ENCODE measurements at regions of chr5 and their contacts with region 1.

Region 1: GRCh38 chr5:16666883-16667398 is 50.1 kb upstream of the RETREG1 start:
- DNase-seq: no peak
- H3K4me3 ChIP-seq: no peak overlapping the region
- H3K27ac ChIP-seq: no peak overlapping the region
- H3K4me1 ChIP-seq: peaks cover 18% of the 10 kb centered on the region
- H3K27me3 ChIP-seq: no peaks in the 10 kb centered on the region
- CTCF ChIP-seq: no peak
- EP300 ChIP-seq: no peak
- POLR2A ChIP-seq: no peak

Region 2: GRCh38 chr5:17355586-17356346 is 688.8 kb after region 1 on chr5:
- intact Hi-C with region 1: no loop called
- DNase-seq: no peak
- H3K4me3 ChIP-seq: no peak overlapping the region
- H3K27ac ChIP-seq: no peak overlapping the region
- H3K4me1 ChIP-seq: peaks cover 3% of the 10 kb centered on the region
- H3K27me3 ChIP-seq: no peaks in the 10 kb centered on the region
- CTCF ChIP-seq: no peak
- EP300 ChIP-seq: no peak
- POLR2A ChIP-seq: no peak

Region 3: DNA sequence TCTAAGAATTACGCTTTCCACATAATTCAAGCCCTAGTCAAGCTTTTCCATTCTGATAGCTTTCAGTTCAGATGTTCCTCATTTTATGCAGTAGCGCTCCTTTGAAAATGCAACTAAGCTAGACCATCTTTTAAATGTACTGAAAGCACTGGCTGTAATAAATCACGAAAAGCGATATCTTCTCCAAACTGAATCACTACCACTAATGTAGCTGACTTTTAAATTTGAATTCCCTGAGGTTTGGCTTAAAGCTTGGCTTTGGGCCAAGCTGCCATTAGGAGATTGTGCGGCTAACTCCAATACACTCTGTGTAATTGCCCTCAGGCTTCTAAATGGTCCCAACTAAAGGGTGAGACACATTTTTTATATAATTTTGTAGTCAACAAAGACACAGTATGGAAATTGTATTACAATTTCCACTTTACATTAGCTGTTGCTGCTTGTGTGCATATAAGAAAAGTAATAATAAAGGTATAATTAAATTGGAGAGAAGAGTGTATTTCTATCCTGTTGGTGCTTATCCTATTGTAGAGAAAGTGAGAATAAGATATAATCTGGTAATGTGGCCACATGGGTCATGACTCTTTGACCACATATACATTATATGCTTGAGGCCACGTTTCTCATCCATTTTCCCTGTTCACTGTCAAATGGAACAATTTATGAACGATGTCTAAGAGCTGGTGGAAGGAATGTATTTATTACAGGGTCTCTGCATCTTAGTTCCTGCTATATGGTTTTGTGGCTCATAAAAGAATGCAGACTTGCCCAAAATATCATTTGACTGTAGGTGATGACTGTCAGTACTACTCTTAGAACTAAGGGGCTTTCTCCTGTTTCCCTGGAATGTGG is 712.4 kb after region 1 on chr5:
- intact Hi-C with region 1: loop called in 1 of 4 experiments (anchors 10 kb)
- DNase-seq: no peak
- H3K4me3 ChIP-seq: no peak overlapping the region
- H3K27ac ChIP-seq: peak overlapping the region in 1 of 2 donors; percentile 19
- H3K4me1 ChIP-seq: peaks cover 8% of the 10 kb centered on the region
- H3K27me3 ChIP-seq: no peaks in the 10 kb centered on the region
- CTCF ChIP-seq: no peak
- EP300 ChIP-seq: no peak
- POLR2A ChIP-seq: no peak

Measured in ovary (tissue), 10 donors.